Activated CD4-positive, alpha-beta memory T cell treated with anti-CD3 and anti-CD28 coated beads for 36 hours (primary cell): ENCODE measurements at regions of chr12 and their contacts with region 1.

Region 1: GRCh38 chr12:14365294-14366208 is at the start of gene ATF7IP:
- DNase-seq: peak; percentile 97
- H3K4me3 Mint-ChIP-seq: peak within 1 kb of the TSS; percentile 76
- H3K27ac Mint-ChIP-seq: peak within 1 kb of the TSS; percentile 91
- H3K4me1 Mint-ChIP-seq: peaks cover 41% of the 10 kb centered on the region
- H3K27me3 Mint-ChIP-seq: peaks cover 1% of the 10 kb centered on the region
- total RNA-seq, gene ATF7IP: 93.0 to 94.1 TPM

Region 2: GRCh38 chr12:13196130-13196921 is 1169.2 kb before region 1 on chr12 and contains the start of gene EMP1:
- CTCF ChIA-PET with region 1: no interaction called
- POLR2A ChIA-PET with region 1: interaction called, 3 read pairs
- intact Hi-C with region 1: loop called (anchors 5 kb)
- DNase-seq: peak; percentile 89
- H3K4me3 Mint-ChIP-seq: peak within 1 kb of the TSS; percentile 83
- H3K27ac Mint-ChIP-seq: peak within 1 kb of the TSS; percentile 79
- H3K4me1 Mint-ChIP-seq: peaks cover 29% of the 10 kb centered on the region
- H3K27me3 Mint-ChIP-seq: peaks cover 4% of the 10 kb centered on the region
- total RNA-seq, gene EMP1: 54.4 to 57.3 TPM

Region 3: GRCh38 chr12:13962699-13963098 is 402.9 kb before region 1 on chr12:
- CTCF ChIA-PET with region 1: no interaction called
- POLR2A ChIA-PET with region 1: no interaction called
- intact Hi-C with region 1: no loop called
- DNase-seq: no peak
- H3K4me3 Mint-ChIP-seq: no peak overlapping the region
- H3K27ac Mint-ChIP-seq: no peak overlapping the region
- H3K4me1 Mint-ChIP-seq: no peaks in the 10 kb centered on the region
- H3K27me3 Mint-ChIP-seq: peaks cover 11% of the 10 kb centered on the region

Region 4: GRCh38 chr12:14239350-14239934 is 126.1 kb before region 1 on chr12:
- CTCF ChIA-PET with region 1: interaction called, 18 read pairs
- POLR2A ChIA-PET with region 1: interaction called, 11 read pairs
- intact Hi-C with region 1: loop called (anchors 1 kb)
- DNase-seq: peak; percentile 62
- H3K4me3 Mint-ChIP-seq: peak overlapping the region; percentile 69
- H3K27ac Mint-ChIP-seq: peak overlapping the region; percentile 74
- H3K4me1 Mint-ChIP-seq: peaks cover 24% of the 10 kb centered on the region
- H3K27me3 Mint-ChIP-seq: no peaks in the 10 kb centered on the region

Region 5: GRCh38 chr12:14384783-14385638 is 19.5 kb after region 1 on chr12:
- CTCF ChIA-PET with region 1: interaction called, 31 read pairs
- POLR2A ChIA-PET with region 1: interaction called, 22 read pairs
- intact Hi-C with region 1: loop called (anchors 1 kb)
- DNase-seq: peak; percentile 77
- H3K4me3 Mint-ChIP-seq: peak overlapping the region; percentile 81
- H3K27ac Mint-ChIP-seq: peak overlapping the region; percentile 96
- H3K4me1 Mint-ChIP-seq: peaks cover 60% of the 10 kb centered on the region
- H3K27me3 Mint-ChIP-seq: no peaks in the 10 kb centered on the region

Region 6: GRCh38 chr12:14403711-14404196 is 38.2 kb after region 1 on chr12:
- CTCF ChIA-PET with region 1: interaction called, 10 read pairs
- POLR2A ChIA-PET with region 1: interaction called, 4 read pairs
- intact Hi-C with region 1: no loop called
- DNase-seq: no peak
- H3K4me3 Mint-ChIP-seq: peak overlapping the region; percentile 55
- H3K27ac Mint-ChIP-seq: peak overlapping the region; percentile 77
- H3K4me1 Mint-ChIP-seq: peaks cover 77% of the 10 kb centered on the region
- H3K27me3 Mint-ChIP-seq: no peaks in the 10 kb centered on the region

Region 7: GRCh38 chr12:14454098-14454907 is 88.8 kb after region 1 on chr12:
- CTCF ChIA-PET with region 1: interaction called, 20 read pairs
- POLR2A ChIA-PET with region 1: interaction called, 5 read pairs
- intact Hi-C with region 1: loop called (anchors 1 kb)
- DNase-seq: peak; percentile 31
- H3K4me3 Mint-ChIP-seq: peak overlapping the region; percentile 20
- H3K27ac Mint-ChIP-seq: peak overlapping the region; percentile 77
- H3K4me1 Mint-ChIP-seq: peaks cover 56% of the 10 kb centered on the region
- H3K27me3 Mint-ChIP-seq: no peaks in the 10 kb centered on the region

Region 8: GRCh38 chr12:14521822-14522221 is 156.3 kb after region 1 on chr12:
- CTCF ChIA-PET with region 1: no interaction called
- POLR2A ChIA-PET with region 1: no interaction called
- intact Hi-C with region 1: no loop called
- DNase-seq: no peak
- H3K4me3 Mint-ChIP-seq: no peak overlapping the region
- H3K27ac Mint-ChIP-seq: no peak overlapping the region
- H3K4me1 Mint-ChIP-seq: no peaks in the 10 kb centered on the region
- H3K27me3 Mint-ChIP-seq: no peaks in the 10 kb centered on the region

Region 9: GRCh38 chr12:14948672-14949071 is 583.1 kb after region 1 on chr12:
- CTCF ChIA-PET with region 1: no interaction called
- POLR2A ChIA-PET with region 1: no interaction called
- intact Hi-C with region 1: loop called (anchors 2 kb)
- DNase-seq: peak; percentile 69
- H3K4me3 Mint-ChIP-seq: peak overlapping the region; percentile 80
- H3K27ac Mint-ChIP-seq: peak overlapping the region; percentile 99
- H3K4me1 Mint-ChIP-seq: peaks cover 82% of the 10 kb centered on the region
- H3K27me3 Mint-ChIP-seq: no peaks in the 10 kb centered on the region